Calu3 (cell line): ENCODE measurements at regions of chr6 and their contacts with region 1.

Region 1: DNA sequence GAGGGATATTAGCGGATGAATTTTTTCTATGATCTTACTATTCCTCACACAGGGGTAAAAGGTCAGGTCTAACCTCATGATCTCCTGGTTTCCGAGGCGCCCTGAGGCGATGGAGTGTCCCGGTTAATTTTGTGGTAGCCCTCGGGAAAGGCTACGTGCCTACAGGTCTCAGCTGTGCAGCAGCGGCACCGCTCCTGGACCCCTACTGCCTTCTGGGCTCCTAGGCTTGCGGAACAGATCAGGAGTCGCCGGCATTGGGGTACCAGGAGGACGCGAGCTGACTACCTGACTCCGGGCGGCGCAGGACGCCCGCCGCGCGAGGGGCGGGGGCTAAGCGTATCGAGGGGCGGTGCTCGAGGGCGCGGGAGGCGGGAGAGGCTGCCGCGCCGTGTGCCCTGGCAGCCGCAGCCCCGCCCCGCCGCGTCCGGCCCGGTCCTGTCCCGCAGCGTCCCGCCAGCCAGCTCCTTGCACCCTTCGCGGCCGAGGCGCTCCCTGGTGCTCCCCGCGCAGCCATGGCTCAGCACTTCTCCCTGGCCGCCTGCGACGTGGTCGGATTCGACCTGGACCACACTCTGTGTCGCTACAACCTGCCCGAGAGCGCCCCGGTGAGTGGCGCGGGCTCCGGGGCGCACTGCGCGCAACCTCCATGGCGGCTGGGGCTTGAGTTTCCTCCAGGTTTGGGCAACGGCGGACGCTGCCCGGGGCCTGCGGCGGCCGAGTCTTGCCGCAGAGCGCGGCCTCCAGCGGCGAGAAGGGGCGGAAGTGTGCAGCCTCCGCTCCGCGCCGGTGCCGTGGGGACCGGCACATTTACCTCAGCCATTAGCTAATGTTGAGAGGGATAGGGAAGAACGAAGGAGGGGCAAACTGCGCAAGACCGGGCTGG is at the start of gene NT5DC1:
- DNase-seq: peak; percentile 91
- H3K4me3 Mint-ChIP-seq: peak within 1 kb of the TSS; percentile 92
- H3K27ac Mint-ChIP-seq: peak within 1 kb of the TSS; percentile 72
- H3K4me1 Mint-ChIP-seq: peaks cover 59% of the 10 kb centered on the region
- H3K27me3 Mint-ChIP-seq: no peaks in the 10 kb centered on the region
- CTCF ChIP-seq: peak; percentile 26
- total RNA-seq, gene NT5DC1: 45.2 and 61.9 TPM in 2 replicates

Region 2: DNA sequence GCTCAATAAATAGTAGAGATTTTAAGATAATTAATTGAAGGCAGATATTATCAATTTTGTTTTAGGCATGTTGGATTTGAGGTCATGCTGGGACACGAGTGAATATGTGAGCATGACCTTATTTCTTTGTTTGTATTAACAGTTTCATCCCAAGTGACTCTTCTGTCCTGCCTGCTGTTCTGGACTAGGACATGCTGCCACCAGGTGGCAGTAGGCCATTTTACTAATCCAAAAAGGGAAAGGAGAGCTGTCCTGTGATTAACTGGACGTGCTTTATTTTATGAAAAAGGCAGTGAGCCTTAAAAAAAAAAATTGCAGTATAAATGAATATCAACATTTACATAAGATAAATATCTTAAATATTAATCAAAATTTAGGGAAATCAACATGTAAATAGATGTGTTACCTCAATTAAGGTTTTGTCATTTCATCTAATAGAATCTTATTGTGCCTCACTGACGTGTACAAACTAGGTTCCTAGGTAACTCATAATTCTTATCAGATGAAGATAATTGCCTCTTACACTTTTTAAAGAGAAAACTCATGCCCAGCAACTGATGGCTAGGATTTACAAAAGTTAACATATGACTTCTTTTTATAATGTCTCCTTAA is 89.8 kb before region 1 on chr6:
- CTCF ChIA-PET with region 1: interaction called, 21 read pairs
- intact Hi-C with region 1: loop called (anchors 1 kb)
- DNase-seq: peak; percentile 78
- H3K4me3 Mint-ChIP-seq: peak overlapping the region; percentile 48
- H3K27ac Mint-ChIP-seq: peak overlapping the region; percentile 98
- H3K4me1 Mint-ChIP-seq: peaks cover 63% of the 10 kb centered on the region
- H3K27me3 Mint-ChIP-seq: no peaks in the 10 kb centered on the region
- CTCF ChIP-seq: peak; percentile 77

Region 3: DNA sequence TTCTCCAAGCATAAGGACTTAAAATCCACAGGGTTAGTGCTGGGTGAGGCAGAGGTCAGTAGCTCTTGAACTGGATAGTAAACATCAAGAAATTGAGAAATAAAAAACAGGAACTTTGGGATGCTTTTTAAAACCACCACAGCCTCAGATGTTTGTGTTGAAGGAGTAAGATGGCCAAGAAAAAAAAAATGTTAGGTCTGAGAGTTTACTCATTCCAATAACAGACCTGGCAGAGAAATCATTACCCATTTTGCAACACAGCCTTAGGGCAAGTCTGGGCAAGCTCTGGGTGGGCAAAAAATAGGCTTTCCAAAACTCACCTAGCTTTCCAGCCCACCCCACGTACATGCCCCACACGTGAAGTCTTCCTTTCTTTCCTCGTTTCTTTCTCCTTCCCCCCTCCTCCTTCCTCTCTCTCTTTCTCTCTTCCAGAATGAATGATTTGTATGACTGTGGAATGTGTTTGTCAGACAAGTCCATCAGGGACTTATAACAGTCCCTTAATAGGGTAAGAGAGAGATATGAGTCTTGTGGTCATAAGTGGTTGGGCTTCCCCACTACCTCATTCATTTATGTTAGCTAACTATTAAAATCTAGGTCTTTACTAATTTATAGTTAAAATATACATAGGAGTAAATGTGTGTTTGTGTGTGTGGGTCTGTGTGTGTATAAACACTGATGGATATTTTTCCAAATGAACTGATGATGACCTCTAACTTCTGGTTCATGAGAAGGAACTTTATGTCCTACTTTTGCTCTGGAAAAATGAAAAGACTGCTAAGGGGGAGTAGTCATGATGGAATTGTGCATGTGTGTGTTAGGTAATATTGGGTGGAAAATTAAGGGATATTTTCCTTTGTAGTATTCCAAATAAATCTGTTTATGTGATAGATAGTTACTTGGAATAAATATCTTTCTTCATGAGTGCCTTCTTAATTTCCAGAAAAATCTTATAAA is 252.1 kb after region 1 on chr6:
- CTCF ChIA-PET with region 1: no interaction called
- intact Hi-C with region 1: no loop called
- DNase-seq: no peak
- H3K4me3 Mint-ChIP-seq: no peak overlapping the region
- H3K27ac Mint-ChIP-seq: no peak overlapping the region
- H3K4me1 Mint-ChIP-seq: no peaks in the 10 kb centered on the region
- H3K27me3 Mint-ChIP-seq: no peaks in the 10 kb centered on the region
- CTCF ChIP-seq: no peak